PC-9 (cell line): ENCODE measurements at regions of chr9 and their contacts with region 1.

Region 1: GRCh38 chr9:5886114-5886939 is 4.4 kb upstream of the MLANA start:
- DNase-seq: peak; percentile 41 to 65
- H3K4me3 ChIP-seq: no peak overlapping the region
- H3K27ac ChIP-seq: no peak overlapping the region
- H3K4me1 ChIP-seq: peaks cover 11% of the 10 kb centered on the region
- H3K27me3 ChIP-seq: no peaks in the 10 kb centered on the region
- CTCF ChIP-seq: peak; percentile 81

Region 2: GRCh38 chr9:5799314-5799713 is 87.0 kb before region 1 on chr9:
- CTCF ChIA-PET with region 1: no interaction called
- POLR2A ChIA-PET with region 1: no interaction called
- intact Hi-C with region 1: loop called (anchors 5 kb)
- DNase-seq: peak; percentile 7 to 46
- H3K4me3 ChIP-seq: no peak overlapping the region
- H3K27ac ChIP-seq: peak overlapping the region; percentile 39
- H3K4me1 ChIP-seq: peaks cover 15% of the 10 kb centered on the region; the same call in 1 of the 2 replicates
- H3K27me3 ChIP-seq: no peaks in the 10 kb centered on the region
- CTCF ChIP-seq: peak; percentile 74

Region 3: GRCh38 chr9:5832543-5833529 is 53.5 kb before region 1 on chr9 and contains the start of gene ERMP1:
- CTCF ChIA-PET with region 1: no interaction called
- POLR2A ChIA-PET with region 1: no interaction called
- intact Hi-C with region 1: loop called (anchors 1 kb)
- DNase-seq: peak; percentile 49 to 78
- H3K4me3 ChIP-seq: peak within 1 kb of the TSS; percentile 87
- H3K27ac ChIP-seq: peak within 1 kb of the TSS; percentile 56
- H3K4me1 ChIP-seq: peaks cover 10% of the 10 kb centered on the region
- H3K27me3 ChIP-seq: no peaks in the 10 kb centered on the region
- CTCF ChIP-seq: peak; percentile 82
- total RNA-seq, gene ERMP1: 51.0 and 64.6 TPM in 2 replicates

Region 4: DNA sequence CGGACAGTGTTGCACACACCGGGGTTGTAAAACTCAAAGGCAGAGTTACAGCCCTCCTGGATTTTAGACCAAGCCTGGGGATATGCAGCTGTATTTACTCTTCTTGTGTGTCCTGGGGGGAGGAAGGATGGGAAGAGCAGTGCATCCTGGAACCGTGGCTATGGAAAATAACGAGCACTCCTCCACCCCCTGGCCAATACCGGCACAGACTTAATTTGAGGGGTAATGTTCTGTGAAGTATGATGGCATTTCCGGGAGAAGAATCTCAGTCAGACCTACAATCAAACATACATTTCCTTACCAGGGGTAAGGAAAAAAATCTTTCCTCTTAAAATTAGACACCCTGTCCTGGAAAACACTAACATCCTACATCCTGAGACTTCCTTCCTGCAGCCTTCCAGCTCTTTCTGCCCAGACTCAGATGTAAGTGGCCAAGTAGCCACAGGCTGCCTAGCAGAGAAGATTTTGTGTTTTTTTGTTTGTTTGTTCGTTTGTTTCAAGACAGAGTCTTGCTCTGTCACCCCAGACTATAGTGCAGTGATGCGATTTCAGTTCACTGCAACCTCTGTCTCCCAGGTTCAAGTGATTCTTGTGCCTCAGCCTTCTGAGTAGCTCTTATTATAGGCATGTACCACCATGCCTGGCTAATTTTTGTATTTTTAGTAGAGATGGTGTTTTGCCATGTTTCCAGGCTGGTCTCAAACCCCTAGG is 42.4 kb before region 1 on chr9:
- CTCF ChIA-PET with region 1: interaction called, 12 read pairs
- POLR2A ChIA-PET with region 1: interaction called, 5 read pairs
- intact Hi-C with region 1: no loop called
- DNase-seq: peak in 1 of 2 experiments; percentile 86
- H3K4me3 ChIP-seq: peak overlapping the region; percentile 25; the same call in 1 of the 2 replicates
- H3K27ac ChIP-seq: peak overlapping the region; percentile 99
- H3K4me1 ChIP-seq: peaks cover 83% of the 10 kb centered on the region
- H3K27me3 ChIP-seq: no peaks in the 10 kb centered on the region
- CTCF ChIP-seq: no peak

Region 5: GRCh38 chr9:6055213-6055612 is 168.9 kb after region 1 on chr9:
- CTCF ChIA-PET with region 1: interaction called, 7 read pairs
- POLR2A ChIA-PET with region 1: no interaction called
- intact Hi-C with region 1: loop called (anchors 1 kb)
- DNase-seq: peak; percentile 44 to 81
- H3K4me3 ChIP-seq: no peak overlapping the region
- H3K27ac ChIP-seq: no peak overlapping the region
- H3K4me1 ChIP-seq: peaks cover 9% of the 10 kb centered on the region; the same call in 1 of the 2 replicates
- H3K27me3 ChIP-seq: no peaks in the 10 kb centered on the region
- CTCF ChIP-seq: peak; percentile 77

Region 6: GRCh38 chr9:6305954-6306563 is 419.7 kb after region 1 on chr9:
- CTCF ChIA-PET with region 1: interaction called, 3 read pairs
- POLR2A ChIA-PET with region 1: no interaction called
- intact Hi-C with region 1: loop called (anchors 10 kb)
- DNase-seq: no peak
- H3K4me3 ChIP-seq: no peak overlapping the region
- H3K27ac ChIP-seq: no peak overlapping the region
- H3K4me1 ChIP-seq: peaks cover 14% of the 10 kb centered on the region
- H3K27me3 ChIP-seq: no peaks in the 10 kb centered on the region
- CTCF ChIP-seq: peak; percentile 64